Sciatic nerve (tissue), 2 donors: ENCODE measurements at regions of chr1 and their contacts with region 1.

Region 1: GRCh38 chr1:106027871-106028270 is 1028.6 kb upstream of the PRMT6 start:
- DNase-seq: no peak
- ATAC-seq: no peak

Region 2: GRCh38 chr1:106222414-106222813 is 194.5 kb after region 1 on chr1:
- intact Hi-C with region 1: no loop called
- DNase-seq: no peak
- ATAC-seq: no peak

Region 3: GRCh38 chr1:107544293-107544692 is 1516.4 kb after region 1 on chr1:
- intact Hi-C with region 1: loop called (anchors 5 kb)
- DNase-seq: no peak
- ATAC-seq: no peak